MCF 10A (cell line): ENCODE measurements at regions of chr2 and their contacts with region 1.

Region 1: DNA sequence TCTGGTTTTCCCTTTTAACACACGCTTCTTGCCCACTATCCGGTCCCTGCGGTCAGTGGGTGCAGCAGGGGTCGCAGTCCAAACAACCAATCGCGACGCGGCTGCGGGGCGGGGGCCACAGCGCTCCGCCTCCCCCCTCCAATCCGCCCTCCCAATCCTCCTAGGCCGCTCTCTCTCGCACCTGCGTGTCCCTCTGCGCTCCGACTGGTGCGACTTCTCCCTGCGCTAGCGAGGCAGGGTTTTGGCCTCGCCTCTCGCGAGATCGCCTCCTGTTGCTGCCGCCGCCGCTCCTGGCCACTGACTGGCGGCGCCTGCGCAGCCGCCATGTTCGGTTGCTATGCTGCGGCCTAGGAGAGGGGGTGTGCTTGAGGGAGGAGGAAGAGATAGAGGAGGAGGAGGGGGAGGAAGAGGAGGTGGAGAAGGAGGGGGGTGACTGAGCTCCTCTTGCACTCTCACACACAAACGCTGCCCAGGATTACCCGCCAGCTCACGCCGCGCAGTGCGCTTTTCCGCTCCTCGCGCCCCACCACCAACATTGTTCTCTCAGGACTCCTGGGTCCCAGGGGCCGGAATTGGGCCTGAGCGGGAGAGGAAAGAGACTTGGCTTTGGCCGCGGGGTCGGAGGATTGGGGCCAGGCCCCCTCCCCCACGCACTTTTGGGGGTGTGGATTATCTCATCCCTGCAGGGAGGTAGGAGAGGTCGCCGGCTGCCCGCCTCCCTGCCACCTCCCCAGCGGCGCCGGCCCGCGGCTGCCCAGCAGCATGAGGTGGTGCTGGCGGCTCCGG is at the start of gene PTPN4:
- DNase-seq: peak; percentile 98
- H3K4me3 Mint-ChIP-seq: peak within 1 kb of the TSS; percentile 81
- H3K27ac Mint-ChIP-seq: peak within 1 kb of the TSS; percentile 89
- H3K4me1 Mint-ChIP-seq: peaks cover 45% of the 10 kb centered on the region
- H3K27me3 Mint-ChIP-seq: no peaks in the 10 kb centered on the region
- CTCF ChIP-seq: no peak
- total RNA-seq, gene PTPN4: 21.1 and 27.2 TPM in 2 replicates

Region 2: GRCh38 chr2:119746836-119747686 is 12.6 kb before region 1 on chr2:
- CTCF ChIA-PET with region 1: interaction called, 6 read pairs
- POLR2A ChIA-PET with region 1: interaction called, 26 read pairs
- intact Hi-C with region 1: no loop called
- DNase-seq: peak; percentile 69
- H3K4me3 Mint-ChIP-seq: no peak overlapping the region
- H3K27ac Mint-ChIP-seq: peak overlapping the region; percentile 10
- H3K4me1 Mint-ChIP-seq: peaks cover 58% of the 10 kb centered on the region
- H3K27me3 Mint-ChIP-seq: no peaks in the 10 kb centered on the region
- CTCF ChIP-seq: no peak

Region 3: GRCh38 chr2:119771331-119771730 is 11.7 kb after region 1 on chr2:
- CTCF ChIA-PET with region 1: interaction called, 3 read pairs
- POLR2A ChIA-PET with region 1: interaction called, 17 read pairs
- intact Hi-C with region 1: no loop called
- DNase-seq: no peak
- H3K4me3 Mint-ChIP-seq: no peak overlapping the region
- H3K27ac Mint-ChIP-seq: no peak overlapping the region
- H3K4me1 Mint-ChIP-seq: peaks cover 16% of the 10 kb centered on the region
- H3K27me3 Mint-ChIP-seq: no peaks in the 10 kb centered on the region
- CTCF ChIP-seq: no peak

Region 4: DNA sequence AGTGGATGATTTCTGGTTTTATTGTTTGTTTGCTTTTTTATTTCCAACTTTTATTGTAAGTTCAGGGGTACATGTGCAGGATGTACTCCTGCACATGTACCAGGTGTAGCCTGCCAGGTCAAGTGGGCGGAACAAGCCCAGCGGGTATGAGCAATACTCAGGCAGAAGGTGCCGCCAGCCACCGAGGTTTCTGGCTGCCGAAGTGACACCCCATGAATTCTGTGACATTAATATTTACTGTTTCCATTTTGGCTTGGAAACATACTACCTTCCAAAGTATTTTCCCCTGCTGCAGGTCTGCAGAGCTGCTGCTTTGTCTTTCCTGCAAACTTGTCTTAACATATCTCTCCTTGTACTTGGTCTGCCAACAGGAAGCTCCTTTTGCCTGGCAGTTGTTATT is 78.5 kb after region 1 on chr2:
- CTCF ChIA-PET with region 1: interaction called, 4 read pairs
- POLR2A ChIA-PET with region 1: interaction called, 17 read pairs
- intact Hi-C with region 1: no loop called
- DNase-seq: peak; percentile 38
- H3K4me3 Mint-ChIP-seq: peak overlapping the region; percentile 66
- H3K27ac Mint-ChIP-seq: peak overlapping the region; percentile 90
- H3K4me1 Mint-ChIP-seq: peaks cover 26% of the 10 kb centered on the region
- H3K27me3 Mint-ChIP-seq: no peaks in the 10 kb centered on the region
- CTCF ChIP-seq: no peak

Region 5: DNA sequence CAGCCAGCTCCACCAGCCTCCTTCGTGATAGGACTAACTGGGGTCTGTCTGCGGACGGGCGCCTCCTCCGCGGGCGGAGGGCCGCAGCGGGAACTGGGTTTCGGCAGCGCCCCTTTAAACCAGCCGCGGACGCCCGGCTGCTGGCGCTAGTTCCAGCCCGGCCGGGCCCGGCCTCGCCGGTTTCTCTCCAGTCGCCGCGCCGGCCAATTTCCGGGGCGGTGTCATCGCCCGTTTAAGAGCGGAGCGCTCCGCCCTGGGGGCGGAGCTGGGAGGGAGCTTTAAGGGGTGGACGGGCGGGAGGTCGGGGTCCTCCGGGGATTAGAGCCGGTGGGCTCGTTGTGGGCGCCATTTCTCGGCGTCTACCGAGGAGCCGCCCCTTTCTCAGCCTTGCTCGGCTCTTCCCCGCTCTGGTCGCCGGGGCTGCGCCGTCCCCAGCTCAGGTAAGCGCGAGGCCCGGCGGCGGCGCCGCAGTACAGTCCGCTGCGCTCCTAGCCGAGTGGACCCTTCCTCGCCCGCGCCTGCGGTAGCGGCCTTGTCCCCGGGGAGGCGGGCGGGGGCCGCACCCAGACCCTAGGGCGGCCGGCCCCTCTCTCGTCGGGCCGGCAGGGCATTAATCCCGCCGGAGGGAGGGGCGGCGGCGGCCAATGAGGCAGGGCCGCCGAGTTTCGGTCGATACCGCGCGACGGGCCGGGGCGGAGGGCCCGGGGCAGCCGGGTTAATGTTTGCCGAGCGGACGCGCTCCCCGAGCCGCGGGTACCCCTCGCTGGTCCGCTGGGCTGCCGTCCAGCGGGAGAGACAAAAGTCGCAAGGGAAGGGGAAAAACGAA is 253.3 kb after region 1 on chr2 and contains the start of gene EPB41L5:
- CTCF ChIA-PET with region 1: no interaction called
- POLR2A ChIA-PET with region 1: interaction called, 8 read pairs
- intact Hi-C with region 1: loop called (anchors 2 kb)
- DNase-seq: peak; percentile 96
- H3K4me3 Mint-ChIP-seq: peak within 1 kb of the TSS; percentile 66
- H3K27ac Mint-ChIP-seq: peak within 1 kb of the TSS; percentile 54
- H3K4me1 Mint-ChIP-seq: peaks cover 26% of the 10 kb centered on the region
- H3K27me3 Mint-ChIP-seq: no peaks in the 10 kb centered on the region
- CTCF ChIP-seq: no peak
- total RNA-seq, gene EPB41L5: 19.0 and 22.8 TPM in 2 replicates

Region 6: GRCh38 chr2:120231974-120232635 is 472.5 kb after region 1 on chr2:
- CTCF ChIA-PET with region 1: no interaction called
- POLR2A ChIA-PET with region 1: no interaction called
- intact Hi-C with region 1: no loop called
- DNase-seq: no peak
- H3K4me3 Mint-ChIP-seq: peak overlapping the region; percentile 67
- H3K27ac Mint-ChIP-seq: no peak overlapping the region
- H3K4me1 Mint-ChIP-seq: no peaks in the 10 kb centered on the region
- H3K27me3 Mint-ChIP-seq: no peaks in the 10 kb centered on the region
- CTCF ChIP-seq: no peak